HAP-1 (cell line): ENCODE measurements at regions of chr7 and their contacts with region 1.

Region 1: DNA sequence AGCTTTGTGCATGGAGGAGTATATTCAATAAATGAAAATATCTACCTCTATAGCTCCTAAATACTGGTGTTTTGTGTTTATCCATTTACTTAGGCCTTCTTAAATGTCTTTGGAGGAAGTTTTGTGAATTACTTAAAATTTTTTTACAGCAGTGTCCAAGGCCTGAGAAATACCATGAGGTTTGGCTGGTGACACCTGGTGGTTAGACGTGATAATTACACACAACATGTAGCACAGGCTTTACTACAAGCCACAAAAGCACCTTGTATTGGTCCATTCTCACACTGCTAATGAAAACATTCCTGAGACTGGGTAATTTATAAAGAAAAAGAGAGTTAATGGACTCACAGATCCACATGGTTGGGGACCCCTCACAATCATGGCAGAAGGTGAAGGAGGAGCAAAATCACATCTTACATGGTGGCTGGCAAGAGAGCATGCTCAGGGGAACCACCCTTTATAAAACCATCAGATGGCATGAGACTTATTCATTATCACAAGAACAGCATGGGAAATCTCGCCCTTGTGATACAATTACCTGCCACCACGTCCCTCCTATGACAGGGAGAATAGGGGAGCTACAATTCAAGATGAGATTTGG is 20.6 kb downstream of the HYAL4 start:
- DNase-seq: peak; percentile 72 to 73
- H3K4me3 ChIP-seq: no peak overlapping the region
- H3K4me1 ChIP-seq: peaks cover 6% of the 10 kb centered on the region; the same call in 1 of the 2 replicates
- H3K27me3 ChIP-seq: no peaks in the 10 kb centered on the region

Region 2: DNA sequence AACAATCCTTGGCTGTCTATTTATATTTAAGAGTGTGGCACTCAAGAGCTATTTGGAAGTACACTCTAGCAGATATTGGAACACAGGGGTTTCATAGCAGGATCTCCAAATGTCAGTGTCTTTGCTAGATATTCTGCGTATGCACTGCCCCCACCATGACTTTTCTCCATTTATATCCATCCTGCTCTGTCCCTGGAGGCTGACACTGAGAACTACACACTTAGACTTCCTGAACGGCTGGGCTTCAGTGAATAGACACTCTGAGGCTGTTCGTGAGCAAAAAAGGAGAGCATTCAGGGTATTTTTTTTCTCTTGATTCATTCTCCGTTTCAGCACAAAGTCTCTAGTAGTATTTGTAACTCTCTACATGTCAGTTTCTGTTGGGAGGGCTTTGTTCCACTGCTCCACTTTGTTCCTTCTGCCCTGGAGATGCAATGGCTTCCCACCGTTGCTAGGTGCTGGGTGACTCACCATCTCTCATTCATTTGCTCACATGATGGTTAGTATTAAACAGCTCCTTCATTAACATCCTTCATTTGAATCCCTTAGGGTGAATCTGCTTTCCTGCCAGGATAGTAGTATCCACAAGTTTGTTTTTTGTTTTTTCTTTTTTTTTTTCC is 509.9 kb before region 1 on chr7:
- in situ Hi-C with region 1: no loop called
- DNase-seq: peak in 1 of 2 experiments; percentile 10
- H3K4me3 ChIP-seq: no peak overlapping the region
- H3K4me1 ChIP-seq: no peaks in the 10 kb centered on the region; the same call in 1 of the 2 replicates
- H3K27me3 ChIP-seq: peaks cover 5% of the 10 kb centered on the region; the same call in 1 of the 2 replicates

Region 3: DNA sequence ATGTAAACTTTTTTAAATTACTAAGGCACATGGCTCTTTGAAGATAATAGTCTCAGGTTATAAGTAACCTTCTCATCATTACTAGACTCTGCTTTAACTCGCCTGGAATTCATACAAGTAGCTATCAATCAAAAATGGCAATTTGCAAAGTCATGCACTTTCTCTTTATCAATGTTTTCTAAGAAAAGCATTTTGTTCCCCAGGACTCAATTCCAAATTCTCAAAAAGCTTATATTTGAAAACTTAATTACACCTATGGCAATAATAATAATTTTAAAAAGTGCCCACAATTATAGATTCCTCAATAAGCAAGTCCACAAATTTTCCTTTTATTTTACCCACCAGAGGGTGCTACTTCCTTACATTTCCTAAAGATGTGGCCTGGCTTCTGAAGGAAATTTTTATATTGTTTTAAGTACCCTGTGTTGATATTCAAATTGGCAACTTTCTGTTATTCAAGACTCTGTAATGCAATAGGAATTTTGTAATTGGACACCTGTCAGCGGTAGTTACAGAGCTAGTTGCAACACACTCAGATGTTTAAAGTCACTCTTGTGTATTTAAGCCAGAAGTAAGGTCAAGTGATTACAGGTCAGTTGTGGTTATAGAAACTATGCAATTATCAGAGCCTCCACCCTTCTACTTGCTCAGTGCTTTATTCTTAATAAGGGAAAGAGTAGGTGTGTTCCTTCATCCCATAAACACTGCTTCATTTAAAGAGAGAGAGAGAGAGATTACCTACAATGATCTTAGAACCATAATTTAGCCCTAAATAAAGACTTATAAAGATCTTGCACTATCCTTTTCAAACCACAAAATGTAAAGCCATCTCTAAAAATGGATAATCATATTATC is 67.7 kb before region 1 on chr7:
- in situ Hi-C with region 1: loop called (anchors 10 kb)
- DNase-seq: peak; percentile 22 to 87
- H3K4me3 ChIP-seq: no peak overlapping the region
- H3K4me1 ChIP-seq: peaks cover 13% of the 10 kb centered on the region
- H3K27me3 ChIP-seq: no peaks in the 10 kb centered on the region